ENCODE measurements at regions of chr2 and their contacts with region 1.

Region 1: GRCh38 chr2:196431957-196432356 is 207.6 kb upstream of the CCDC150 start:
- DNase-seq: no peak
- CTCF ChIP-seq: no peak

Region 2: GRCh38 chr2:196421880-196422279 is 10.1 kb before region 1 on chr2:
- CTCF ChIA-PET with region 1: interaction called, 19 read pairs
- POLR2A ChIA-PET with region 1: no interaction called
- DNase-seq: no peak
- CTCF ChIP-seq: no peak